ENCODE measurements at regions of chr9 and their contacts with region 1.

Region 1: DNA sequence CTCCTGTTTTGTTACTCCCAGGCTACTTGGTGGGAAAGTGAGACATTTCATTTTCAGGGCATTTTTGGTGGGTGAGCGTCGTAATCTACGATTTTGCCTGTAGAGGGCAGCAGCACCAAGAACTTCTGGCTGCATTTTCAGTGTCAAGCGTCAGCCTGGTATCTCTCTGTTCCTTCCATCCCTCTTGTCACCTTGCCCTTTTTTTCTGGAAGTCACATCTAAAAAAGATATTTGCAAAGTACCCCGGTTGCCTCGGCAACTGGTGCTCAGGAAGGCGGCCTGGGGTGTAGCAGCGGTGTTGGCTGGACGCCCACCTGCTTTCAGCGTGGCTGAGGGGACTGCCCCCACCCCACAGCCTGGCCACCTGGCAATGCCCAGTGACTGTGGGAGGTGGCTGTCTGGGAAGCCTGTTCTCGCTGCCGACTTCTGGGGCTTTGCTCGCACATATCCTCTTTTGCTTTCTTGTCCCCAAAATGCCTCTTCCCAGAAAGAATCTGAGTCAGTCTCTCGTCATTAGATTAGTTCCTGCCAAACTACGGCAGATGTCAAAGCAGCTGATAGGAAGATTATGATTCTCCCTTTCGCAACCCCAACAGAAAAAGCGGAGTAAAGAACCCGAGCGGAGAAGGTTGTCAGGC is 84.5 kb downstream of the ACER2 start:
- DNase-seq: peak; percentile 82

Region 2: GRCh38 chr9:19925817-19926503 is 432.7 kb after region 1 on chr9:
- in situ Hi-C with region 1: loop called (anchors 25 kb)
- DNase-seq: peak; percentile 80

Measured in KBM-7 (cell line).